ENCODE measurements at regions of chr12 and their contacts with region 1.

Region 1: GRCh38 chr12:4276524-4277204 is 3.1 kb downstream of the CCND2 start:
- DNase-seq: peak; percentile 67
- ATAC-seq: peak; percentile 92
- H3K4me3 ChIP-seq: no peak overlapping the region
- H3K27ac ChIP-seq: no peak overlapping the region
- H3K4me1 ChIP-seq: peaks cover 5 to 13% of the 10 kb centered on the region in 2 experiments; a peak in 3 of 4 replicates
- H3K27me3 ChIP-seq: peaks cover 28% of the 10 kb centered on the region
- CTCF ChIP-seq: peak; percentile 65 to 92 (median 88); a peak in 5 of 6 replicates
- POLR2A ChIP-seq: no peak
- RAD21 ChIP-seq: peak; percentile 89

Region 2: GRCh38 chr12:3885277-3886094 is 391.2 kb before region 1 on chr12:
- CTCF ChIA-PET with region 1: interaction called, 91 read pairs
- POLR2A ChIA-PET with region 1: interaction called, 5 read pairs
- RAD21 ChIA-PET with region 1: interaction called, 5 to 6 read pairs
- intact Hi-C with region 1: loop called (anchors 1 kb)
- DNase-seq: peak; percentile 8
- ATAC-seq: no peak
- H3K4me3 ChIP-seq: no peak overlapping the region
- H3K27ac ChIP-seq: no peak overlapping the region
- H3K4me1 ChIP-seq: no peaks in the 10 kb centered on the region
- H3K27me3 ChIP-seq: peaks cover 33% of the 10 kb centered on the region
- CTCF ChIP-seq: peak; percentile 40 to 84 (median 71); a peak in 5 of 6 replicates
- POLR2A ChIP-seq: no peak
- RAD21 ChIP-seq: peak; percentile 74

Region 3: DNA sequence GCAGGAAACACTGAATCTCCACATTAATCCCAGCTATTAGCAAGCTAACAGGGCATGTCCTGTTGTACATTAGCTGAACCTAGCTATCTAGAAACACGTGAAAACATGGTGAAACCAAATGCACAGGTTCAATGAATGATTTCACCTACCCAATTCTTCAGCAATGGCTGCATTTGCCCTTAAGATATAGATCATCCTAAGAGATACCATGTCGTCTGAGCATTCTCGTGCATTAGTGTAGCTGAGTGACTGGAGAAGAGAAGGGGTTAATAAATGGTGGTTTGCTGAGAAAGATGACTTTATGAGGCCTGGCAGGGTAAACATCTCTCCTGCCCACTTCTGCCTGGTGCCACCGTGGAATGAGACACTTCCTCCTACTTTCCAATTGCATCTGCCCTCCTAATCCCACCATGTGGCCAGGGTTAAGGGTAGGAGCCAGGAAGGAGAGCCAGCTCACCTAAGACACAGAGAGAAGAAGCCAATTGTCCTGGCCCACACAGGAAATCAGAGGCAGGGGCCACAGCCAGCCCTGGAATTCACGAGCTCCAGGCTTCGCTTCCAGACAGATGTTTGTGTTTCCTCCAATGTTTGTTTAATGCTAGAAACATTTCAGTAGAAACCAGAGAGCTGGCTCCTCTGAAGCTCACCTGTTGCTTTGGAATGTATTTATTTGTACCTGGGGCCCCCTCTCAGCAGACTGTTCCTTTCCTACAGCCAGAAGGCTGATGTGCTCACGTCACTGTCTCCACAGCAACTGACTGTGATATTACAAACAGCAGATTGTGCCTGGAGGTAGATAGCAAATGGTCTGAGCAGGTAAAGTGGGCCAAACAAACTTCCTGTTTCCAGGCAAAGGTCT is 277.5 kb before region 1 on chr12:
- CTCF ChIA-PET with region 1: interaction called, 28 read pairs
- POLR2A ChIA-PET with region 1: no interaction called
- RAD21 ChIA-PET with region 1: interaction called in 1 of 2 experiments, 4 read pairs
- intact Hi-C with region 1: loop called (anchors 1 kb)
- DNase-seq: no peak
- ATAC-seq: no peak
- H3K4me3 ChIP-seq: no peak overlapping the region
- H3K27ac ChIP-seq: no peak overlapping the region
- H3K4me1 ChIP-seq: no peaks in the 10 kb centered on the region
- H3K27me3 ChIP-seq: peaks cover 13% of the 10 kb centered on the region; the same call in 1 of the 2 replicates
- CTCF ChIP-seq: no peak
- POLR2A ChIP-seq: no peak
- RAD21 ChIP-seq: no peak

Region 4: DNA sequence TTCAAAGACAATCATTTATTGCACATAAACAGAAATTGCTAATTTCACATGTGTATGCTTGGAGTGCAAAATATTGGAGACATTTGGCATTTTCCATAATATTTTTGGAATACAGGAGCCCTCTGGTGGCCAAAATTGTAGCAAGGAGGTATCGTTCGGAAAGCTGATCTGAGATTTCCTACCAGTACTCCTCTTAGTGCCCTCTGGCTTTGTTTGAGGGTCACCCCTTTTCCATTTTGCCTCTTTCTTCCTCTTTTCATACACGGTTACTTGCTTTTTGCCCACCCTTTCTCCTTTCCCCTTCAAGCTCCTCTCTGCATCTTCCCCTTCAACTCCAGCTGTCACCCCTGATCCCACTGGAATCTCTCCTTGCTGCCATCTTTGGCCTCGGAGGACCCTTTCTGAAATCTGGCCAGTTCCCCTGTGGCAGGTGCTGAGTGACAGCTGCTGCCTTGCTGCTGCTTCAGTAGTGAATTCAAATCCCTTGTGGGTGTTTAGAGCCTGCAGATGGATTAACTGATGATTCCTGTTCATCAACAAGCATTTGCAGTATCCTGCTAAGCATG is 238.8 kb before region 1 on chr12:
- CTCF ChIA-PET with region 1: interaction called, 25 read pairs
- POLR2A ChIA-PET with region 1: no interaction called
- RAD21 ChIA-PET with region 1: interaction called in 1 of 2 experiments, 5 read pairs
- intact Hi-C with region 1: loop called (anchors 5 kb)
- DNase-seq: no peak
- ATAC-seq: peak; percentile 54; the same call in 1 of the 2 replicates
- H3K4me3 ChIP-seq: no peak overlapping the region
- H3K27ac ChIP-seq: no peak overlapping the region
- H3K4me1 ChIP-seq: no peaks in the 10 kb centered on the region
- H3K27me3 ChIP-seq: peaks cover 60% of the 10 kb centered on the region
- CTCF ChIP-seq: peak; percentile 67 to 76 (median 73)
- POLR2A ChIP-seq: no peak
- RAD21 ChIP-seq: peak; percentile 71

Region 5: GRCh38 chr12:4080213-4080612 is 196.5 kb before region 1 on chr12:
- CTCF ChIA-PET with region 1: no interaction called
- POLR2A ChIA-PET with region 1: no interaction called
- RAD21 ChIA-PET with region 1: no interaction called
- intact Hi-C with region 1: no loop called
- DNase-seq: no peak
- ATAC-seq: no peak
- H3K4me3 ChIP-seq: no peak overlapping the region
- H3K27ac ChIP-seq: no peak overlapping the region
- H3K4me1 ChIP-seq: no peaks in the 10 kb centered on the region
- H3K27me3 ChIP-seq: peaks cover 56% of the 10 kb centered on the region
- CTCF ChIP-seq: no peak
- POLR2A ChIP-seq: no peak
- RAD21 ChIP-seq: no peak